Transverse colon (tissue), 4 donors: ENCODE measurements at regions of chr16 and their contacts with region 1.

Region 1: DNA sequence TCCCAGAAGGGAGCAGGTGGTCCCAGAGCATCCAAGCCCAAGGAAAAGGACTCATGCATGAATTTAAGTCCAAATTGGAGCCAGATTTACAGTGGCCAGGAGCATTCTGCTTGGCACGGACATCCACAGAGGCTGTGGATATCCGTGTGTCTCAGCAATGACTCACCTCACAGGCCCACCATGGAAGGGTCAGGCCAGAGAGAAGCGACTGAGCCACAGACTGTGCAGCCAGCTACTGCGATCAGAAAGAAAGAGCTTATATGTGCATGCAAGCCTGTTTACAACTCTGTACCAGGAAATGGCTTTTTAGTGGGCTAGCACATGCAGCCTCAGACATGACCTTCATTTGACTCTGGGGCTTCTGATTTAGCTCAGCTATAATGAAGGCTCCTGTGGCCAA is 231.0 kb downstream of the C16orf95 start:
- DNase-seq: no peak
- H3K4me3 ChIP-seq: no peak overlapping the region
- H3K27ac ChIP-seq: no peak overlapping the region
- H3K4me1 ChIP-seq: no peaks in the 10 kb centered on the region
- H3K27me3 ChIP-seq: no peaks in the 10 kb centered on the region
- CTCF ChIP-seq: no peak
- EP300 ChIP-seq: no peak
- POLR2A ChIP-seq: no peak

Region 2: GRCh38 chr16:87145181-87146176 is 59.3 kb after region 1 on chr16:
- in situ Hi-C with region 1: loop called in 1 of 4 experiments (anchors 10 kb)
- intact Hi-C with region 1: no loop called
- DNase-seq: no peak
- H3K4me3 ChIP-seq: no peak overlapping the region
- H3K27ac ChIP-seq: no peak overlapping the region
- H3K4me1 ChIP-seq: no peaks in the 10 kb centered on the region
- H3K27me3 ChIP-seq: no peaks in the 10 kb centered on the region
- CTCF ChIP-seq: no peak
- EP300 ChIP-seq: no peak
- POLR2A ChIP-seq: no peak

Region 3: GRCh38 chr16:87531418-87531817 is 445.3 kb after region 1 on chr16:
- in situ Hi-C with region 1: no loop called
- intact Hi-C with region 1: no loop called
- DNase-seq: no peak
- H3K4me3 ChIP-seq: no peak overlapping the region
- H3K27ac ChIP-seq: no peak overlapping the region
- H3K4me1 ChIP-seq: no peaks in the 10 kb centered on the region
- H3K27me3 ChIP-seq: peaks cover 4% of the 10 kb centered on the region
- CTCF ChIP-seq: no peak
- EP300 ChIP-seq: no peak
- POLR2A ChIP-seq: no peak